Right lobe of liver (tissue), 6 donors: ENCODE measurements at regions of chr11 and their contacts with region 1.

Region 1: GRCh38 chr11:20387241-20388095 is at the start of gene PRMT3:
- DNase-seq: peak; percentile 97 to 98 (median 97)
- ATAC-seq: peak; percentile 97
- H3K4me3 ChIP-seq: peak within 1 kb of the TSS; percentile 87 to 97 (median 89)
- H3K27ac ChIP-seq: peak within 1 kb of the TSS; percentile 75 to 90 (median 81)
- H3K4me1 ChIP-seq: peaks cover 0 to 10% (median 3%) of the 10 kb centered on the region in 4 donors
- H3K27me3 ChIP-seq: no peaks in the 10 kb centered on the region
- CTCF ChIP-seq: peak; percentile 92 to 99 (median 94)
- POLR2A ChIP-seq: peak; percentile 86
- total RNA-seq, gene PRMT3: 3.4 to 11.8 (median 4.6) TPM

Region 2: DNA sequence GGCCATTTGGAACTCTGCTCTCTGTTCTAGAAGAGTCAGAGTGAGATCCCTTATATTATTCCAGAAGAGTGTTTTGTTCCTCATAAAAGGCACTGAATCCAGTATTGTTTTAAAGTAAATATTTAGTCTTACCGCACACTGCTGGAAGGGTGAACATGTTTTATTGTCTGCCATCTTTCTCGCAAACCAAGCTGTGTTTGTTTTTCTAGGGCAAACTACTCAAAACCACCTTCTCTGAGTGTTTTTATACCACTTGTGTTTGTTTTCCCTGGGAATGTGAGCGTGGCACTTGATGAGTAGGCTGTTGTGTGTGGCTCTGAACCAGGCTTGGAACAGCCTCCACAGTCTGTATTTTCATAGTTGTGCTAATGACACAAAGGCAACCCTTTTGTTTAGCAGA is 317.0 kb before region 1 on chr11:
- intact Hi-C with region 1: no loop called
- DNase-seq: no peak
- ATAC-seq: peak in 3 of 4 donors; percentile 16 to 33 (median 28)
- H3K4me3 ChIP-seq: no peak overlapping the region
- H3K27ac ChIP-seq: no peak overlapping the region
- H3K4me1 ChIP-seq: no peaks in the 10 kb centered on the region
- H3K27me3 ChIP-seq: no peaks in the 10 kb centered on the region
- CTCF ChIP-seq: no peak
- POLR2A ChIP-seq: no peak

Region 3: GRCh38 chr11:20609727-20610707 is 222.5 kb after region 1 on chr11:
- intact Hi-C with region 1: loop called (anchors 10 kb)
- DNase-seq: peak; percentile 78 to 81 (median 79)
- ATAC-seq: peak; percentile 97 to 100 (median 100)
- H3K4me3 ChIP-seq: no peak overlapping the region
- H3K27ac ChIP-seq: no peak overlapping the region
- H3K4me1 ChIP-seq: peaks cover 0 to 20% (median 0%) of the 10 kb centered on the region in 4 donors
- H3K27me3 ChIP-seq: peaks cover 0 to 14% of the 10 kb centered on the region in 2 donors
- CTCF ChIP-seq: peak; percentile 93 to 99 (median 96)
- POLR2A ChIP-seq: no peak